Panc1 (cell line): ENCODE measurements at regions of chr2 and their contacts with region 1.

Region 1: GRCh38 chr2:179349670-179350303 is 85.2 kb upstream of the SESTD1 start:
- DNase-seq: no peak
- ATAC-seq: no peak
- H3K4me3 ChIP-seq: no peak overlapping the region
- H3K27ac ChIP-seq: no peak overlapping the region
- H3K4me1 ChIP-seq: no peaks in the 10 kb centered on the region
- H3K27me3 ChIP-seq: no peaks in the 10 kb centered on the region
- CTCF ChIP-seq: no peak

Region 2: GRCh38 chr2:179331061-179331460 is 18.7 kb before region 1 on chr2:
- CTCF ChIA-PET with region 1: no interaction called
- POLR2A ChIA-PET with region 1: no interaction called
- in situ Hi-C with region 1: no loop called
- intact Hi-C with region 1: no loop called
- DNase-seq: no peak
- ATAC-seq: no peak
- H3K4me3 ChIP-seq: no peak overlapping the region
- H3K27ac ChIP-seq: no peak overlapping the region
- H3K4me1 ChIP-seq: no peaks in the 10 kb centered on the region
- H3K27me3 ChIP-seq: no peaks in the 10 kb centered on the region
- CTCF ChIP-seq: no peak

Region 3: GRCh38 chr2:179393481-179393880 is 43.7 kb after region 1 on chr2:
- CTCF ChIA-PET with region 1: no interaction called
- POLR2A ChIA-PET with region 1: no interaction called
- in situ Hi-C with region 1: no loop called
- intact Hi-C with region 1: loop called (anchors 1 kb)
- DNase-seq: no peak
- ATAC-seq: no peak
- H3K4me3 ChIP-seq: no peak overlapping the region
- H3K27ac ChIP-seq: no peak overlapping the region
- H3K4me1 ChIP-seq: no peaks in the 10 kb centered on the region
- H3K27me3 ChIP-seq: no peaks in the 10 kb centered on the region
- CTCF ChIP-seq: no peak